ENCODE measurements at regions of chr12 and their contacts with region 1.

Region 1: DNA sequence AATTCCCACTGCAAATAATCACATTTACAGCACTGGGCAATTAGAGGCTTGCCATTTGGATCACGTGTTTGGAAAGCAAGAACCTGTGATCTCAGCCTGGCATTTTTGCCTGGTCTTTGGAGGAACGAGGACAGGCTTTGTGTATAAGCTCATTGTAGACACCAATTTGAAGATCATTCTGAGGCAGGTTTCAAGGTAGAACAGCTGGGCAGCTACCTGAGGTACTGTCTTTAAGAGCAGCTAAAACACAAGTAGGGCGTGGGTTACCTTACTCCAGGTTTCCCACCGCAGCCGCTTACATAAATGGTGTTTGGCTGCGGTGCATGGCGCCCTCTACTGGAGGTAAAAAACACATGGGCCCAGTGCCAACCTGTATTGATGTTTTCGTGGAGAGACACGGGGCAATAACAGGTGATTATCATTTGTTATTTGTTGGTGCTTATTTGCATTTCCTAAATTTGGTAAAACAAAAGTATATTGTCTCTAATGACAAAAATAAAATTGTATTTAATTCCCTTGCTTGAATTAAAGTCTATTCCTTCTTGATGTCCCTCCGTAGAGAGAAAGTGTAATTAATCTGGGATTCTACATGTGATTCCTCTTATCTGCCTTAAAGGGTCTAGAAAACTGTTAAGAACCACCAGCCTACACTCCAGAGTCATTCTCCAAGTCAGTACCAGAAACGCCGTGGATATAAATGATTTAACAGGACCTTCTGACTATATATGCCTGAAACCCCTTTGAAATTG is 69.7 kb downstream of the SVOP start:
- DNase-seq: peak; percentile 68
- H3K4me3 ChIP-seq: peak overlapping the region in 1 of 3 experiments; percentile 26
- H3K27ac ChIP-seq: no peak overlapping the region
- H3K4me1 ChIP-seq: peaks cover 24% of the 10 kb centered on the region
- H3K27me3 ChIP-seq: no peaks in the 10 kb centered on the region
- CTCF ChIP-seq: peak; percentile 81 to 87

Region 2: DNA sequence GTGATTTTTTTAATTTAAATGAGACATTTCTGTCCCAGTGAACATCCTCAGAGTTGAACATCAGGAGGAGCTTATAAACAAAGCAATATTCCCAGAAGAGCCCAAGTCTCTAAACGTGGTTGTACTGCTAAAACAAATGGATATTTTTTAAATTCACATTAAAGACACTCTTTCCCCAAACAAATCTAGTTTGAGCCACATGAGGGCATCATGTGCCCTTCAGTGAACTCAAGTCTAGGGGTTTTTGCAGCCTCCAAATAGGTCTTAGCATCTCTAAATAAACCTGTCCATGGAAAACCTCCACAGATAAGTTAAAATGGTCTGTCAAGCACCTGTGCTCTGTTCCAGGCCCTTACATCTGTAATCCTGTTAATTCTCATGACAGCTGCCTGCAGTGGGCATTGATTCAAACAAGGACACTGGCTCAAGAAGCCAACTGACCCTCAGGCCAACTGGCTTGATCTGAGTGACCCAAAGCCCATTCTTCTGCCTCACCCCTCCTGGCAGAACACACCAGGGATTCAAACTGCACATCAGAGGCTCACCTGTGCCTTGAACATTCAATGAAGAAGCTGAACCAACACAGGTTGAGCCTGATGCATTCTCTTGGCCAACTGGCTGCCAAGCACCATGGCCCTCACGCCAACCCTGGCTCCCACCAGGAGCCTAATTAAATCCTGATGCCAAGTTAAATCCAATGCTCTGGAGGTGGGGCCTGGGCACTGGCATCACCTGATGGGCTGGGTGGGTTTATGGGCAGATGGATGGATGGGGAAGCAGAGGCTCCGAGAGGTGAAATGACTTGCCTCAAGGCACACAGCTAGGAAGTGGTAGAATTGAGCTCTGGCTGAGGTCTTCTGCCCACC is 380.2 kb before region 1 on chr12:
- CTCF ChIA-PET with region 1: no interaction called
- dilution Hi-C with region 1: no loop called
- in situ Hi-C with region 1: no loop called
- intact Hi-C with region 1: loop called (anchors 2 kb)
- DNase-seq: no peak
- H3K4me3 ChIP-seq: no peak overlapping the region
- H3K27ac ChIP-seq: no peak overlapping the region
- H3K4me1 ChIP-seq: peaks cover 7% of the 10 kb centered on the region
- H3K27me3 ChIP-seq: no peaks in the 10 kb centered on the region
- CTCF ChIP-seq: peak; percentile 19 to 30

Region 3: DNA sequence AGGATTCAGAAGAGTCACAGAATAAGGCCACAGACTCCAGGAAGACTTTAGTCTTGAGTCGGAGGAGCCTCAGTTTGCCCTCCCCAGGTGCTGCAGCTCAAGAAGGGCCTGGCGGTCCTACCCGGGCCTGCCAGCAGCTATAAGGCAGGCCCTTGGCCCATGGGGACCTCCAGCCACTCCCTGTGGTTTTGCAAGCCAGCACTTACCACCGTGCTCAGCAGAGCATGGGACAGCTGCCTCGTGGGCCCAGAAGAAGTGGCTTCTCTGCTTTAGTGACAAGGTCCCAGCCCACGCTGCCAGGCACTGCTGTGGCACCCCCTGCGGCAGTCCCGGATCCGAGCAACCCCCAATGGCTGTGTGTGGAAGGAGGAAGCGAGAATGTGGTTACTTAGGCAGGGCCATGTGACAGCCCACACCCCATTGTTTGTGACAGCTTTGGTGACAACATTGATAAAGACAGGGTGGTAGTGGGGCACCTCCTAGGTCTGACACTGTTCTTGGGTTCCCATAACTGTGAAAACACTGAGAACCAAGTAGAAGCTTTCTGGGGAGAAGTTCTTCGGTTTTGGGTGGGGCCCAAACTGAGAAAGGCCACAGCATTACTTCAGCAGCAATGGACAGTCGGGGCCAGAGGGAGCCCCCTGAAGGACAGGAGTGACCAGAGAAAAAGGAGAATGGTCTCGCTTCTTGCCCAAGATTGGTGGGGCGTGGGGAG is 317.5 kb before region 1 on chr12 and contains the start of gene SELPLG:
- CTCF ChIA-PET with region 1: no interaction called
- dilution Hi-C with region 1: no loop called
- in situ Hi-C with region 1: loop called in 1 of 2 experiments (anchors 25 kb)
- intact Hi-C with region 1: no loop called
- DNase-seq: no peak
- H3K4me3 ChIP-seq: no peak within 1 kb of the TSS
- H3K27ac ChIP-seq: no peak within 1 kb of the TSS
- H3K4me1 ChIP-seq: peaks cover 25% of the 10 kb centered on the region
- H3K27me3 ChIP-seq: no peaks in the 10 kb centered on the region
- CTCF ChIP-seq: no peak
- total RNA-seq, gene SELPLG: 0.47 to 0.50 TPM

Region 4: GRCh38 chr12:108664338-108665258 is 286.6 kb before region 1 on chr12:
- CTCF ChIA-PET with region 1: interaction called, 10 read pairs
- dilution Hi-C with region 1: no loop called
- in situ Hi-C with region 1: no loop called
- intact Hi-C with region 1: loop called (anchors 1 kb)
- DNase-seq: peak; percentile 90
- H3K4me3 ChIP-seq: no peak overlapping the region
- H3K27ac ChIP-seq: peak overlapping the region; percentile 75
- H3K4me1 ChIP-seq: peaks cover 21% of the 10 kb centered on the region
- H3K27me3 ChIP-seq: no peaks in the 10 kb centered on the region
- CTCF ChIP-seq: peak; percentile 97 to 98

Region 5: DNA sequence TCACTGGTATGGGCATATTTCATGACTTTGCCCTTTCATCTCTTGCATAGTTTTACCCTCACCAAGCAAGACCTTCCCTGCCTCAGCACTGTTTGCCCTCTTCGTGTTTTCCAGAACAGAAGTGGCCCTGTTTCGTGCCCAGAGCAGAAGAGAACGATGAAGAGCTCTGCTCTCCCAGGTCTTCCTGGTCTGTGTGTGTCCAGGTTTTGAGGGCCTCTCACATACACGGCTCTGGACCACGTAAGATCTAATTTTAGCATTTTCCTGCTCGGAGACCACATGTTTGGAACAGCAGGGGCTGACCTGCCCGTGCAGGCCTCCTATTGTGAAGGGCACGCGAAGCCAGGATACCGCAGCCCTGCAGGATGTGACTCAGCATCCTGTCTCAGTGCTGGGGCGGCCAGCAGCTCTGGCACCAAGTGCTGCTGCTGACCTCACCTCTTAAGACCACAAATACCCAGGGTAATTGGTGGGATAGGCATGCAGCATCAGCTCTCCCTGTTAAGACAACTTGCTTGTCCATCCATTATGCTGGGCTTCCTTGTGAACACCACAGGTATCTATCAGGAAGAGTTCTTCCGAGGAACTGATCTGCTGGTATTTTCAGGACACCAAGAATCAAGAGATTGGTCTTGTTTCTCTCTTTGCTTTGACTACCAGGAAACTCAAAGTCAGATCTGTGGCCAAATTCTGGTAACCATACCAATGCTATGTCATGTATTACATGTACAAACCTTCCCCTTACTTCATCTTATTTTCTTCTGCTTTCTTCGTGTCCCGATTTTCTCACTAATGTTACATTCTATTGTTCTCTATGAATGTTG is 112.8 kb before region 1 on chr12:
- CTCF ChIA-PET with region 1: no interaction called
- dilution Hi-C with region 1: no loop called
- in situ Hi-C with region 1: no loop called
- intact Hi-C with region 1: loop called (anchors 1 kb)
- DNase-seq: peak; percentile 99
- H3K4me3 ChIP-seq: no peak overlapping the region
- H3K27ac ChIP-seq: peak overlapping the region; percentile 97
- H3K4me1 ChIP-seq: peaks cover 84% of the 10 kb centered on the region
- H3K27me3 ChIP-seq: no peaks in the 10 kb centered on the region
- CTCF ChIP-seq: no peak

Region 6: DNA sequence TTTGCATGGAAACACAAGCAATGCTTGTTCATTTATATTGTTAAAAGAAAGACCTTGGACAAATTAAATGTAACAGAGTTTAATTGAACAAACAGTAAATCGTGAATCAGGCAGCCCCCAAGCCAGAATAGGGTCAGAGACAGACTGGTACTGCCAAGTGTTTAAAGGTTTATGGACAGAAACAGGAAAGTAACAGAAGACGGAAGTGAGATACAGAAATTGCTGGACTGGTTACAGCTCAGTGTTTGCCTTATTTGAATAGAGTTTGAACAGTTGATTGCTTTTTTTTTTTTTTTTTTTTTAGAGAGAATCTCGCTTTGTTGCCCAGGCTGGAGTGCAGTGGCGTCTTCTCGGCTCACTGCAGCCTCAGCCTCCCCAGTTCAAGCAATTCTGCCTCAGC is 21.0 kb before region 1 on chr12:
- CTCF ChIA-PET with region 1: no interaction called
- dilution Hi-C with region 1: no loop called
- in situ Hi-C with region 1: no loop called
- intact Hi-C with region 1: no loop called
- DNase-seq: no peak
- H3K4me3 ChIP-seq: no peak overlapping the region
- H3K27ac ChIP-seq: no peak overlapping the region
- H3K4me1 ChIP-seq: no peaks in the 10 kb centered on the region
- H3K27me3 ChIP-seq: peaks cover 1% of the 10 kb centered on the region
- CTCF ChIP-seq: no peak

Region 7: DNA sequence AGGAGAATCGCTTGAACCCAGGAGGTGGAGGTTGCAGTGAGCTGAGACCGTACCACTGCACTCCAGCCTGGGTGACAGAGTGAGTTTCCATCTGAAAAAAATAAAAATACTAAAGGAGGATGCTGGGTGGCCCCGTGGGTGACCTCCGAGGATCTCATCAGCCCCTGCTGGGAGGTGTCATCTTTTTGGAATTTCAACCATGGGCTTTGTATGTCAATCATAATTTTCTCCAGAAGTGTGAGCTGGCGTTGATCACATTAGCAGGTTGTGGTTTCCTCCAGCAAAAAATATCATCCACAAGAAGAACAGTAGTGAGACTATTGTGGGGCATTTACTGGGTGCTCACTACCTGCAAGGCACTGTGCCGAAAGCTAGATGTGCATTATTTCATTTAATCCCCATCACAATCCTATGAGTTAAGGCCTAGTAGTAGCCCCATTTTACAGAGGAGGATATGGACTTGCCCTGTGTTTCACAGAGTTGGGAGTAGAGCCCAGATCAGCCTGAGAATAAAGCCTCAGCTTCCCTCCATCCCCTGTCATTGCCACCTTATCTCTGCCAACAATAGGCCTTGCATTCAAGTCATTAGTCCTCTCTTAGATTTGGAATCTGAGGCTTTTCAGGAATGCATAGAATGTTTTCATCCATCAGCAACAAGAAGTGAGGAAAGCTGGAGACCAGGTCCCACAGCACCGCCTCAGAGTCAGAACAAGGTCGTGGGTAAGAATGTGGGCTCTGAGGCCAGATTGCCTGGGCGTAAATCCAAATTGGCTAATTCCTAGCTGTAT is 29.9 kb after region 1 on chr12:
- CTCF ChIA-PET with region 1: no interaction called
- dilution Hi-C with region 1: no loop called
- in situ Hi-C with region 1: no loop called
- intact Hi-C with region 1: no loop called
- DNase-seq: no peak
- H3K4me3 ChIP-seq: no peak overlapping the region
- H3K27ac ChIP-seq: no peak overlapping the region
- H3K4me1 ChIP-seq: no peaks in the 10 kb centered on the region
- H3K27me3 ChIP-seq: no peaks in the 10 kb centered on the region
- CTCF ChIP-seq: no peak

Region 8: DNA sequence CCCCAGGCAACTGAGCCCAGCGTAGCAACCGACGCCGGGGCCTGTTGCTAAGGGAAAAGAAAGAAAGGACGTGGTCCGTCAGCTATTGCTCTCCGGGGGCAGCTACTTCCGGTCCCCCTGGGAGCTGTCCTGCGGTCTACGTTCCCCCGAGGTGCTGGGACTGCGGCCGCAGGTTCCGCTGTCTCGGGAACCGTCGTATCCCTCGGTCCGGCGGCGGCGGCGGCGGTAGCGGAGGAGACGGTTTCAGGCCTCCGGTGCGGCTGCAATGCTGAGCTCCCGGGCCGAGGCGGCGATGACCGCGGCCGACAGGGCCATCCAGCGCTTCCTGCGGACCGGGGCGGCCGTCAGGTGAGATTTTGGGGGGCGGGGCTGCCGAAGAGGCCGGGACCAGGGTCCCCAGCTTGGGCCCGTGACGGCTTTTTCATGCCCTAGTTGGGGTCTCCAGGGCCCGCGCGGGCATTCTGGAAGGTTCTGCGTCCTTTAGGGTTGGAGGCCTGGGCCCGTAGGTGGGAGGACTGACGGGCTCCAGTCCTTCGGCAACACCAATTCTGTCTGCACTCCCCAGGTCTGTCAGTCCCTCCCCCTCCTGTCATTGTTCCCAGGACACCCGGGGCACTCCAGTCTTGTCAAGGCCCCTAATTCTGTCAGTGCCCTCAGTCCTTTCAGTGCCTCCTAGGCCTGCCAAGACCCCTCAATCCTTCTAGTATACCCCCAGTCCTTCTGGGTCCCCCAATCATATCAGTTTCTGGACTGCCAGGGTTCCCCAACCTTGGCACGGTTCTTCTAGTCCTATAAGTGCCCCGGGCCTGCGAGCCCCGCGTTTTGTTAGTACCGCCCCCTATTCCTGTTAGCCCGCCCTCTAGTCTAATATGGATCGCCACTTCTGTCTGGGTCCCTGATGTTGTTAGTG is 101.5 kb after region 1 on chr12 and contains the start of gene USP30:
- CTCF ChIA-PET with region 1: no interaction called
- dilution Hi-C with region 1: no loop called
- in situ Hi-C with region 1: no loop called
- intact Hi-C with region 1: no loop called
- DNase-seq: peak; percentile 71
- H3K4me3 ChIP-seq: peak within 1 kb of the TSS; percentile 70 to 80 (median 77)
- H3K27ac ChIP-seq: peak within 1 kb of the TSS; percentile 56
- H3K4me1 ChIP-seq: peaks cover 11% of the 10 kb centered on the region
- H3K27me3 ChIP-seq: no peaks in the 10 kb centered on the region
- CTCF ChIP-seq: no peak
- total RNA-seq, gene USP30: 10.0 to 13.5 TPM

Region 9: GRCh38 chr12:109385339-109386067 is 434.3 kb after region 1 on chr12:
- CTCF ChIA-PET with region 1: interaction called, 9 read pairs
- dilution Hi-C with region 1: no loop called
- in situ Hi-C with region 1: no loop called
- intact Hi-C with region 1: loop called (anchors 10 kb)
- DNase-seq: peak; percentile 55
- H3K4me3 ChIP-seq: no peak overlapping the region
- H3K27ac ChIP-seq: no peak overlapping the region
- H3K4me1 ChIP-seq: no peaks in the 10 kb centered on the region
- H3K27me3 ChIP-seq: no peaks in the 10 kb centered on the region
- CTCF ChIP-seq: peak; percentile 18 to 56

Measured in mammary epithelial cell (primary cell).